Activated B cell treated with CpG ODN at 0.5 μM for 24 hours (primary cell): ENCODE measurements at regions of chr5 and their contacts with region 1.

Region 1: GRCh38 chr5:96752341-96753016 is 55.3 kb downstream of the ERAP1 start:
- DNase-seq: no peak
- ATAC-seq: no peak
- H3K4me3 Mint-ChIP-seq: no peak overlapping the region
- H3K27ac Mint-ChIP-seq: no peak overlapping the region
- H3K4me1 Mint-ChIP-seq: no peaks in the 10 kb centered on the region
- H3K27me3 Mint-ChIP-seq: no peaks in the 10 kb centered on the region
- CTCF ChIP-seq: peak; percentile 76

Region 2: DNA sequence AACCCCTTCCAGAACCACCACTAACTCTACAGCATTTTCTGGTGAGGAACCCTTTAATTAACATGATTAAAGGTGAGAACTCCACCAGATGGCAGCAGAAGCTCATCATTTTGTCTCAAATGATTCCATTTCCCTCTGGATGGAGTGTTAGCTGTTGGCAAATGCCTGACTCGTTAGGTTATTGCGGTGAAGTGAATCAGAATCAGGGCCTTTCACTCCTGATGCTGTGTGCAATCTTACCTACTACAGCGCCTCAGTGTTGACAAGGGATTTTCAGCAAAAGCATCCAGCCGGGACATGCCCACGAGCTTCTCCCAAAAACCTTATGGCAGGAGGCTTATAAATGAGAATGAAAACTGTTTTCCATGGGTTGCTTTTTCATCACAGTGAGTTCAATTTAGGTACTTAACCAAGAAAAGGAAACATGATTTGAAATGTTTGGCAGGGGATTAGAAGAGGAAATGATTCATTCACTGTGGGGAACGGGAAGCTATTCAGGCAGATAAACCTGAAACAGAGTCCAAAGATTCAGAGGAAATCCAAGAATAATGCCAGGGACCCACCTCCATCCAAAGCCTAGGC is 138.3 kb before region 1 on chr5:
- CTCF ChIA-PET with region 1: interaction called, 19 read pairs
- POLR2A ChIA-PET with region 1: no interaction called
- intact Hi-C with region 1: loop called (anchors 2 kb)
- DNase-seq: no peak
- ATAC-seq: peak; percentile 50
- H3K4me3 Mint-ChIP-seq: no peak overlapping the region
- H3K27ac Mint-ChIP-seq: no peak overlapping the region
- H3K4me1 Mint-ChIP-seq: peaks cover 4% of the 10 kb centered on the region
- H3K27me3 Mint-ChIP-seq: peaks cover 13% of the 10 kb centered on the region
- CTCF ChIP-seq: peak; percentile 22

Region 3: GRCh38 chr5:96781031-96781937 is 28.8 kb after region 1 on chr5:
- CTCF ChIA-PET with region 1: interaction called, 4 read pairs
- POLR2A ChIA-PET with region 1: interaction called, 12 read pairs
- intact Hi-C with region 1: no loop called
- DNase-seq: no peak
- ATAC-seq: no peak
- H3K4me3 Mint-ChIP-seq: no peak overlapping the region
- H3K27ac Mint-ChIP-seq: no peak overlapping the region
- H3K4me1 Mint-ChIP-seq: no peaks in the 10 kb centered on the region
- H3K27me3 Mint-ChIP-seq: no peaks in the 10 kb centered on the region
- CTCF ChIP-seq: no peak

Region 4: GRCh38 chr5:97142521-97143254 is 390.2 kb after region 1 on chr5 and contains the start of gene LIX1:
- CTCF ChIA-PET with region 1: interaction called, 10 read pairs
- POLR2A ChIA-PET with region 1: no interaction called
- intact Hi-C with region 1: no loop called
- DNase-seq: no peak
- ATAC-seq: peak; percentile 60
- H3K4me3 Mint-ChIP-seq: no peak within 1 kb of the TSS
- H3K27ac Mint-ChIP-seq: no peak within 1 kb of the TSS
- H3K4me1 Mint-ChIP-seq: no peaks in the 10 kb centered on the region
- H3K27me3 Mint-ChIP-seq: peaks cover 3% of the 10 kb centered on the region
- CTCF ChIP-seq: no peak
- total RNA-seq, gene LIX1: not detected in 2 replicates

Region 5: DNA sequence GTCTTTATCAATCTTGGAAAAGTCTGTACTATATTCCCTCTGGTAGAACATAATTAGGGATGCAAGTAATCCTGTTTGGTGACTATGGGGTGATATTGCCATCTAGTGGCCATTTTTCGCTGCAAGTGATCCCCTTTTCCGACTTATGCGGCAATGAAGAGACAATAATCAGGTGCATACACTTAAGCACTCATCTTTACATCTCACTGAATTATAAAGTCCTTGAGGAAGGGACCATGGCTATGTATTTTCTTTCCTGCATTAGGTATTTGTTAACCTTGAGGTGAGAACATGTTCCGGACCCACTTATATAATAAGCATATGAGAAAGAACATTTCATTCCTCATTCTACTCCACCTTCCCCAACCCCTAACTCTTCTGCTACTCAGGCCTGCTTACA is 409.6 kb after region 1 on chr5:
- CTCF ChIA-PET with region 1: interaction called, 105 read pairs
- POLR2A ChIA-PET with region 1: no interaction called
- intact Hi-C with region 1: loop called (anchors 1 kb)
- DNase-seq: no peak
- ATAC-seq: peak; percentile 31
- H3K4me3 Mint-ChIP-seq: no peak overlapping the region
- H3K27ac Mint-ChIP-seq: no peak overlapping the region
- H3K4me1 Mint-ChIP-seq: peaks cover 3% of the 10 kb centered on the region
- H3K27me3 Mint-ChIP-seq: no peaks in the 10 kb centered on the region
- CTCF ChIP-seq: peak; percentile 68

Region 6: DNA sequence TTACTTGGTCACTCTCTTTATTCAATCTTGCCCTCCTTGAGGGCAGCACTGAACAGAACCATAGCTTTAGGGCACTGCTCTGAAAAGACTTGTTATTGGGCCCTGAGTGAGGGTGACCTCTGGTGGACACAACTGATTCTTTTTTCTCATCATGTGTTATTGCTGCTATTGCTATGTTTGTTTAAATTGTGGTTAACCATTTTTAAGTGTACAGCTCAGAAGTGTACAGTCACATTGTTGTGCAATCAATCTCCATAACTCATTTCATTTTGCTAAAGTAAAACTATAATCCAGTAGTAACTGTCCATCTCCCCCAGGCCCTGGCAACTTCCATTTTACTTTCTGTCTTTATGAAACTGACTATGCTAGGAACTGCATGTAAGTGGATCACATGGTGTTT is 781.7 kb after region 1 on chr5:
- CTCF ChIA-PET with region 1: interaction called, 5 read pairs
- POLR2A ChIA-PET with region 1: no interaction called
- intact Hi-C with region 1: loop called (anchors 2 kb)
- DNase-seq: no peak
- ATAC-seq: no peak
- H3K4me3 Mint-ChIP-seq: no peak overlapping the region
- H3K27ac Mint-ChIP-seq: no peak overlapping the region
- H3K4me1 Mint-ChIP-seq: no peaks in the 10 kb centered on the region
- H3K27me3 Mint-ChIP-seq: no peaks in the 10 kb centered on the region
- CTCF ChIP-seq: no peak